Right cardiac atrium (tissue), 5 donors: ENCODE measurements at regions of chr3 and their contacts with region 1.

Region 1: GRCh38 chr3:32022947-32023346 is 41.4 kb downstream of the ZNF860 start:
- DNase-seq: no peak
- ATAC-seq: no peak
- H3K4me3 ChIP-seq: no peak overlapping the region
- H3K27ac ChIP-seq: no peak overlapping the region
- H3K4me1 ChIP-seq: no peaks in the 10 kb centered on the region
- H3K27me3 ChIP-seq: no peaks in the 10 kb centered on the region

Region 2: GRCh38 chr3:32143849-32144757 is 121.2 kb after region 1 on chr3:
- intact Hi-C with region 1: loop called (anchors 2 to 5 kb)
- DNase-seq: no peak
- ATAC-seq: peak; percentile 75 to 83
- H3K4me3 ChIP-seq: no peak overlapping the region
- H3K27ac ChIP-seq: no peak overlapping the region
- H3K4me1 ChIP-seq: no peaks in the 10 kb centered on the region
- H3K27me3 ChIP-seq: no peaks in the 10 kb centered on the region